Left colon (tissue), 2 donors: ENCODE measurements at regions of chr6 and their contacts with region 1.

Region 1: DNA sequence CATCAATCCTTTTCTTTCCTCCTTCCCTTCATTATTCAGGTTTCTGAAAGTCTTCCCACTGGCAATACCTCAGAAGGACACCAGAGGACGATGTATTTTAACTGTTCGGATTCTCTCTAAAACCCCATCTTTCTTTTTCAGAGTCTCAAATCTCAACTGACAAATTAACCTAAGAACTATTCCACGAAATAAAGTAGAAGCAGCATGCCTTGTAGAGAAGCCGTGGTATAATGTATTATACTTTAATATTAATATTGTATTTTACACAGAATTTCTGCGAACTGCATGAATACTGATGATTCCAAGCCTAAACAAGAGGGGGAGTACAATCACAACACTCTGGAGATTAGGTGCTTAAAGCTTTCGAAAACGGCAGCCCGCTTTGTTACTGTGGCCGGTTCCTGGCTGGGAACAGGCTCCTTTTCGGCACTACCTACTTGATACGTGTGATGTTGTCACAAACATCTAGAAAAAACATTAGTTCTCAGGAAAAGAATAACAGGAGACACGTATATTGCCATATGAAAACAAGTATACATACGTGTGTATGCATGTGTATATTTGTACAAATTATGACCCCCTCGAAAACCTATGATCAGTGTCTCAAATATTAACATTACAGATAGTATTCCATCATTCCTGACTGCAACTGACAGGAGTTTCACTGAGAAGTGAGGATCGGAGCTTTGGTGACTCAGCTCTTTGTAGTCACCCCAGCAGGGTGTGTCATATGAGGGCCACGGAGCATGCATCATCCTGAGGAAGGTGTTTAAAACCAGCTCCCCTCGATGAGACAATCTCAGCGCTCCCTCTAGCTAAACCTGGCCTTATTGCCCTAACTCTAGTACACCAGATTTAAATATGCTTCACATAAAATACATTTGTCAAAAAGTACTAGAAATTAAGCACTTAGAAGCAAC is 319.7 kb upstream of the TCF21 start:
- DNase-seq: peak in 1 of 2 donors; percentile 26
- ATAC-seq: no peak

Region 2: GRCh38 chr6:133410628-133411027 is 158.6 kb before region 1 on chr6:
- intact Hi-C with region 1: no loop called
- DNase-seq: no peak
- ATAC-seq: no peak

Region 3: GRCh38 chr6:133916650-133917151 is 347.5 kb after region 1 on chr6:
- intact Hi-C with region 1: loop called in 1 of 2 experiments (anchors 5 kb)
- DNase-seq: peak; percentile 70 to 94
- ATAC-seq: peak; percentile 84

Region 4: DNA sequence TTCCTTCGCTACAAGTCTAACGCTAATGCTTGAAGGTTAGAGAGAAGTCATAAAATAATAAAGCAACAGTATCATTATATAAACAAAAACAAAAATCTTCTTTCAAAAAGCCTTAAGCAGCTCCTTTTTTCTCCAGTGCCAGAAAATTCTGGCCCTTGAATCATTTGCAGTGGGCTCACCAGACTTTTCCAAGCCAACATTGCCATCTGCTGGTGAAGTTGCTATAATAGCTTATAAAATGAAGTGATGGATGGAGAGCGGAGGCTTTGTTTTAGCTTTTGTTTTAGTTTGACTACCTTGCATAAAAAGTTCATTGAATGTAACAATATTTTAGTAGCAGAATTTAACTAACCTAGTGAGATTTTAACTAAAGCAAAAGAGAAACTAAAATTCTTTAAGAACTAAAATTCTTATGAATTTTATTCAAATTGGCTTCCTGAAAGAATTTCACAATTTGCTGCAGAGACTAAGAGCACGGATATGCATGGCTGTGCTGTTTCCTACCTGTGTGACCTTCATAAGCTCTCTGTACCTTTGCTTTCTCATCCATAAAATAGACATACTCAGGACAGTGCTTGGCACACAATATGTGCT is 528.0 kb after region 1 on chr6:
- intact Hi-C with region 1: loop called in 1 of 2 experiments (anchors 10 kb)
- DNase-seq: peak; percentile 30 to 67
- ATAC-seq: peak; percentile 62

Region 5: DNA sequence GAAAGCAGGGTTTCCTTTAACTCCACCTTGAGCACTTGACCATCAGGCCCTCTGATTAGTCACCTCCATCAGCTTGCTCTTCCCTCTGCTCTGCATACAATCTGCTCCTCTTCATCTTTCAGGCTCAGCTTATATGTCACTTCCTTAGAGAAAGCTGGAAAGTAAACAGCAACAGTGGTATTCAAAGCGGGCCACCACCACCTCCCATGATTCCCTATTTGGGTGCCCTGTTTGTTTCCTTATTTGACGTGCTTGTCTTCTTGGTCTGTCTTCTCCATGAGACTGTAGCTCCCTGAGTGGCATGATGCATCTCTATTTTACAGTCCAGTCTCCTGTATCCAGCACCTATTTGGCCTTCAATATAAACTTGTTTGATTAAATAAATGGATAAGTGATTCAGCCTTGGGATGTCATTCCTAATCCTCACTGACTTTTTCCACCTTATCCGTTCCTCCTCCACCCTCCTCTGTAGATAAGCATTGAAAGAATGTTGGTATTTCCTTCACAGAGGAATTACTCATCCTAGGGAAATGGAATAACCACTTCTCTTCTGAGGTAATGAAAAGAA is 851.5 kb after region 1 on chr6:
- intact Hi-C with region 1: no loop called
- DNase-seq: no peak
- ATAC-seq: no peak